AG04449 (cell line): ENCODE measurements at regions of chr10 and their contacts with region 1.

Region 1: DNA sequence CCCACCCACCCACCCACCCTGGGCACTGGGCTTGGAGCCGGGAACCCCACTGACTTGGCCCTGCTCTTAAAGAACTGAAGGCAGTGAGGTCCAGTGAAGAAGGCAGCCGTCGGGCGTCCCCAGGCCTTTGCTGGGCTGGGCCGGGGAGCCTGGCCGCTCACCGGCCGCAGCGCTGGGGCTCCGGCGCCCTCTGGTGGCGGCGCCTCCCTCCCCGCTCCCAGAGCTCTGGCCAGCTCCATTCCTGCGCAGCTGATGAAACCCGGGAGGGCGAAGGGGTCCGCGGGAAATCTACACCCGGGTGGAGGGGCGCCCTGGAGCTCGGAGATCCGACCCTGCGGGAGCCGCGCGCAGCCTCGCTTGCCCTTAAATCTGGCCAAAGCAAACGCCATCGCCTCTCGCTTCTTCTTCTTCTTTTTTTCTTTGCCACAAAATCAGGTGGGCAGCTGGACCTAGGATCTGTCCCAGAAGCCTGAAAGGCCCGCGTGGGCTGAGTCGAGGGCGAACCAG is 1.7 kb upstream of the CXCL12 start:
- DNase-seq: no peak
- H3K4me3 ChIP-seq: peak overlapping the region; percentile 42
- CTCF ChIP-seq: peak; percentile 88

Region 2: DNA sequence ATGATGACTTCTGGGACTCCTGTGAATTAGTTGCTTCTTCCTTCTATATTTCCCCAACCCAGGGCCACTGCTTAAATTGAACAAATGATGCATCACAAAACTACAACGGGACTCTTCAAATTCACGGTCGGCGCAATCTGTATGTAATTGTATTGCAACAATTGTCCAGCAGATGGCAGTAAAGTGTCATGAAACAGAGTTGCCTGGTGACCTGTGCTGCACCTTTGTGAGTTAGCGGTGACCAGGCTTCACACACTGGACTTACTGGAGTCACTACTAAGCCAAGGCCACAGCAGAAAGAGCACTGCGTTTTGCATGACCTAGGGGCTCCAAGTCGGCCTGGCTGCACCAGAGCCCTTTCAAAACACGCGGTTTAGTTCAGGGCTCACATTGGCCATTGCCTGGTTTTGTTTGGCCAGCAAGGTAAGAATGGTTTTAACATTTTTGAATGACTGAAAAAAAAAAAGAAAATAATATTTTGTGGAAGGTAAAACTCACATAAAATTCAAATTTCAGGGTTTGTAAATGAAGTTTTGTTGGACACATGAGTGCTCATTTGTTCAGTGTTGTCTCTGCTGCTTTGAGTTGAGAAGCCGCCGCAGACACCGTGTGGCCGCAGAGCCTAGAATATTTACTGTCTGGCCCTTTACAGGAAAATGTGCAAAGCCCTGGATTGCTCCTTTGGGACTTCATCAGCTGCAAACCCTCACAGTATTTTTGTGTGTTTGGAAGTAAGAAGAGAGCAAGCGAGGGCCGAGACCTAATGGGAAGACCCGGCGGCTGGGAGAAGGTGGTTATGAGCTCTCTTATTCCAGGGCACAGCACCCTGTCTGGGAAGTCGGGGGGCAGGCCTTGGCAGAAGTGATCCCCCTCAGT is 714.7 kb before region 1 on chr10:
- CTCF ChIA-PET with region 1: interaction called, 106 read pairs
- POLR2A ChIA-PET with region 1: no interaction called
- DNase-seq: no peak
- H3K4me3 ChIP-seq: no peak overlapping the region
- CTCF ChIP-seq: peak; percentile 56

Region 3: DNA sequence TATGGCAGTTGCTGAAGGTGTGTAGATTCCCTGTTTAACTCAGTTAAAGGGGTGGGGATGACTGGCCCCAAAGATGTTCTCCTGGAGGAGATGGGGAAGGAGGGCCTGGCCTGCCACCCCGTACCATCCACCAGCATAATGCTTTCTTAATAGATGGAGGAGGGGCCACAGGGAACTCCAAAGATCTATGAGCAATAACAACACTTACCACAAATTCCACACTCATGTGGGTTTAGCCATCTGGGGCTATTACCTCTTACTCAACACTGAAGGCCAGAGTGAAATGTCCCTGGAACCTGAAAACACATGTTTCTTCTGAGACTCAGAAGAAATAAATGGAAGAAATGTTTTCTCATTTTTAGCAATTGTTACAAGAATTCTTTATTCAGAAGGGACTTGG is 260.7 kb before region 1 on chr10:
- CTCF ChIA-PET with region 1: no interaction called
- POLR2A ChIA-PET with region 1: no interaction called
- DNase-seq: peak; percentile 67
- H3K4me3 ChIP-seq: no peak overlapping the region
- CTCF ChIP-seq: no peak

Region 4: GRCh38 chr10:44370731-44371248 is 15.8 kb before region 1 on chr10:
- CTCF ChIA-PET with region 1: interaction called, 12 read pairs
- POLR2A ChIA-PET with region 1: no interaction called
- DNase-seq: no peak
- H3K4me3 ChIP-seq: no peak overlapping the region
- CTCF ChIP-seq: no peak

Region 5: GRCh38 chr10:44376479-44377099 is 10.0 kb before region 1 on chr10:
- CTCF ChIA-PET with region 1: interaction called, 13 read pairs
- POLR2A ChIA-PET with region 1: no interaction called
- DNase-seq: no peak
- H3K4me3 ChIP-seq: no peak overlapping the region
- CTCF ChIP-seq: no peak

Region 6: DNA sequence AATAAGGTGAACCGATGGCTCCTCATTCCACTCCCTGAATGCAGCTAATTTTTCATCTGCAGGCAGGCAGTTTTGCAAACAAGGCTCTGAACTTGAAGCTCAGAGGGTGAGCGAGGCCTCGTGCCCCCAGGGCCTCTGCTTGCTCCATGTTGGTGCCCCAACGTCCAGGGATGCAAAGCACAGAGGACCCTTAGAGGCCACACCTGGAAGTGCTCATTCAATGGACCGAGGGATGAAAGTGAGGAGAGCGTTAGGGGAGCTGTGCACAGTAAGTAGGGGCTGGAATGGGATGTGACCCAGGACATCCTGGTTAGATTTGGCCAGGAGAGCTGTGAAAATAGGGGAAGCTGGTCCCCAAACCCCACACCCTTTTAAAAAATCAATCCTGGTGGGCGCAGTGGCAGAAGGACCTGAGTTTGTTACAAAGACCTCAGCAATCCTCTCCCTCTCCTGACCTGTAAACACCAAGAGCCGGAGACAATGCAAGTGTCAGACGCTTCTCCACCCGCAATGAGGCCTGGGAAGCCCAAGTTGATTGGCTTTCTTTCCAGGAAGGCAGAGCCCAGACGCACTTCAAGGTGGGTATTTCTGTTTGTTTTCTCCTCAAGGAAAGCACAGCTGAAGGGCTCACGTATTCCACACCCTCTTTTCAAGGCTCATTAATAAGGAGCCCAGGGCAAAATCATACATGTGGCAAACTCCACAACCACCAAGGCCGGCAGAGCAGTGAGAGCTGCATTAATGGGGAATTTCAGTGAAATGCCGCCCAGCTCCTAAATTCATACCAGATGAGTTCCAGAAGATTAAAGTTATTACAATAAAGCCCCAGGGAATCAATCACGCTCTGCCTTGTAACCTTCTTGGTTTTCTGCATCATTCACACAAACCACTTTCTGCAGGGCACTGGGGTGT is 12.4 kb after region 1 on chr10:
- CTCF ChIA-PET with region 1: interaction called, 19 read pairs
- POLR2A ChIA-PET with region 1: no interaction called
- DNase-seq: no peak
- H3K4me3 ChIP-seq: no peak overlapping the region
- CTCF ChIP-seq: no peak

Region 7: GRCh38 chr10:44492662-44493061 is 106.1 kb after region 1 on chr10:
- CTCF ChIA-PET with region 1: no interaction called
- POLR2A ChIA-PET with region 1: no interaction called
- DNase-seq: no peak
- H3K4me3 ChIP-seq: no peak overlapping the region
- CTCF ChIP-seq: no peak

Region 8: DNA sequence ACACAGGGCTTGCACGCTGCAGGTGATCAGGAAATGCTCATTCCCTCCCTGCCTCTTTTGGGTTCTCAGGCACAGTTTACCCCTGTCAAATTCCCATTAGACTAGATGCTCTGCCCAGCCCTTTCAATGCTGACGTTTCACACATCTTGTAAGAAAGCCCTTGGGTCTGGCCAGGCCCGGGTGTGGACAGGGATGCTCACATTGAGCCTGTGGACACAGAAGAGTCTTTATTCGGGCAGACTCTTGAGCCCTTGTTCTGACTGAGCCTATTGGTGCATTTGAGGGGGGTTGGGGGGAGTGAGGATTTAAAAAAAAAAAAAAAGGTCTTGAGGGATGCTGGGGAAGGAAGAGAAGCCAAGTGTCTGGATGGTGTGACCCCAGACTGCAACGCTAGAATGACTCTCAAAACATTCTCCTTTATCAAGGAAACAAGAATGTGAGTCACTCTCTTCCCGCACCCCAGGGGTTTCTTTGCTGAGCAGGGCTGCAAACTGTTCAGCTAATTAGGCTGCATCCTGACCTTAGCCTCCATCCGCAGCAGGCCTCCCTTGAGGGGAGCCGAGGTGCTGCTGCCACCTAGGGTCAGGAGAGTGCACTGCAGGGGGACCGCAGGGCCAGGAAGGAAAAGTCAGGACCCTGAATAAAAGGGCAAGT is 470.9 kb after region 1 on chr10:
- CTCF ChIA-PET with region 1: interaction called, 80 read pairs
- POLR2A ChIA-PET with region 1: no interaction called
- DNase-seq: no peak
- H3K4me3 ChIP-seq: no peak overlapping the region
- CTCF ChIP-seq: peak; percentile 98

Region 9: DNA sequence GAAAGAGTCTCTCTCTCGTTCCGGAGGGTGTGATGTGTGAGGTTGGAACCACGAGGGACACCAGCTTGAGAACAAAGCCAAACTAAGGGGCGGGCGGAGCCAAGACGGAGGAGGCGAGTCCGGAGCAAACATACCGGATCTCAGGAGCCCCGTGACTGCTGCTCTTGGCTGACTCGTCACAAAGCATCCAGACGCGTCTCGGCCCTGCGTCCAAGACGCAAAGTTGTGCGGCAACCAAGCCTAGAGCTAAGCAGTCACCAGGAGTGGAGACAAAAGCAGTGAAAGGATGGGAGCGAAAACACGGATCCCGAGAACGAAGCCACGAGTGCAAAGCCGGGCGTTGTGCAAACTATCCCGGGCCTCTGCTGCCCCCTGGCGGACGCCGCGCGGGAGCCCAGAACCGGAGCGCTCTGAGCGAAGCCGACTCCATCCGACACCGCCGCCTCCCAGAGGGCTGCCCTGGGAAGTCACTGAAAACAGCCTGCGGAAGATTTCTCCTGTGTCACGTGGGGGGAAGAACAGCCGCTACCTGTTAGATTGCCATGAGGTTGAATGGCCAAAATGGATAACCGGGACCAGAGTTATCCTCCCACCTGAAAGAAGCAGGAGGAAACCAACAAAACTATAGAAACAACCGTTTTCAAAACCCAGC is 478.2 kb after region 1 on chr10:
- CTCF ChIA-PET with region 1: interaction called, 80 read pairs
- POLR2A ChIA-PET with region 1: no interaction called
- DNase-seq: no peak
- H3K4me3 ChIP-seq: peak overlapping the region; percentile 69
- CTCF ChIP-seq: peak; percentile 95